PC-9 (cell line): ENCODE measurements at regions of chr12 and their contacts with region 1.

Region 1: DNA sequence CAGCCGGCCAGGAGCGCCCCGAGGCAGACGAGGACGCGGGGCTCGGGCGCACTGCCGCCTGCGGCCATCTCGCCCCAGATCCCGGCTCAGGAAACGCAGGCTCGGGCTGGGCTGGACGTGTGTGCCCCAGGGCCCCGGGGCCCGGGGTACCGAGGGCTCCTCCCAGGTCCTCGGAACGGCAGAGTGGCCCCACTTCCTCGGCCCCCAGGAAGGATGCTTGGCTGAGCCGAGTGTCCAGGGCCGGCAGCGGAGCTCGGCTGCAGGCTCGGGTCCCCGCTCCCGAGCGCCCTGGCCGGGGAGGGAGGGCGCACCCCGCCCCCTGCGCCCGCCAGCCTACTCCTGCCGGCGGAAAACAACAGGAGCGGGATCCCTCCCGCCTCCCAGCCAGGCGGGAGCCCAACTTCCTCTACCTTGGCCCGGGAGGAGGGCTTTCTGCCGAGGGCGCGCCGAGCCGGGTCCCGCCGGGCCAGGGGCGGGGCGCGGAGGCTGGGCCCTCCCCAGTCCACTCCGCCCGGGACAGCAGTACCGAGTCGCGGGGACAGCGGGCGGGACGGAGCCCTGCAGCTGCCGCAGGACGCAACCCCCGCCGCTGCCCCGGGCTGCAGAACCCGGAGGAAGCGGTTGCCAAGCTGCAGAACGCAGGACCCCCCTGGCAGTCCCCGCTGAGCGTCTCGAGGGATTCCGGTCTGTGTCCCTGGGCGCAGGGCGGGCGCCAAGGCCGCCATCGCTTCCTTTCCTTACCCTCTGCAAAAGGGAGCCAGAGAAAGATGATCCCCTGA is at the start of gene VSIG10:
- DNase-seq: peak; percentile 49 to 82
- H3K4me3 ChIP-seq: peak within 1 kb of the TSS; percentile 81
- H3K27ac ChIP-seq: 0 out of 2 replicates have a peak within 1 kb of the TSS, but pooled peaks have one; percentile 2
- H3K4me1 ChIP-seq: peaks cover 18% of the 10 kb centered on the region
- H3K27me3 ChIP-seq: no peaks in the 10 kb centered on the region
- CTCF ChIP-seq: no peak
- total RNA-seq, gene VSIG10: 45.7 and 49.1 TPM in 2 replicates

Region 2: DNA sequence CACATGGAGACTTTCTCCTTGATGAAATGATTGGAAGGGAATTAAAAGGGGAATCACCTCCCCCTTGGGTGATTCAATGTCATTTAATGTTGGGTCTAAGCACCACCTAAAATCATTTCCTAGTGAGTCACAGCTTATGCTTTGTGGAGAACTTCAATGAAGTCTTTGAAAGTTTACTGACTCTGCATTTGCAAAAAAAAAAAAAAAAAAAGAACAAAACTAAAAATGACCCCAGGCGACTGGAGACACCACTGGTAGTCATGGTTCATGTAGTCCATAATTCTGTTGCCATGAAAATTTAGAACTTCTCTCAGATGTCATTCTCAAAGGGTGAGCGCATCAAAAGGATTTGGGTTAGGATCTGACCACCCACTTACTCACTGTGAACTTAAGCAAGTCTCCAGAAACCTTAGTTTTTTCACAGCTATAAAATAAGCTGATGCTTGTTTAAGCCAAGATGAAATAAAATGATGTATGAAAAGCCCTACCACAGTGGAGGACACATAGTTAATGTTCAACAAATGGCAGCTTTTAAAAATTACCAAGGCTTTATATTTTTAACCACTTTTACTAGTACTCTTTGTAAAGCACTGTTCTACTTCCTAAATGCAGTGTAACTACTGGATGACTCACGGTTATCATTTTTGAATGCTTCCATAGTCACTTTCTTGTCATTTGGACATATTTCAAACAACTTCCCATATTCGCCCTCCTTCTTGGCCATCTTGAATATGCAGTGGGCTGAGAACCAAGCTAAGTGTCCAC is 116.9 kb before region 1 on chr12:
- CTCF ChIA-PET with region 1: no interaction called
- POLR2A ChIA-PET with region 1: no interaction called
- intact Hi-C with region 1: no loop called
- DNase-seq: peak; percentile 3 to 89
- H3K4me3 ChIP-seq: peak overlapping the region; percentile 26; the same call in 1 of the 2 replicates
- H3K27ac ChIP-seq: peak overlapping the region; percentile 82
- H3K4me1 ChIP-seq: peaks cover 21% of the 10 kb centered on the region
- H3K27me3 ChIP-seq: no peaks in the 10 kb centered on the region
- CTCF ChIP-seq: no peak

Region 3: GRCh38 chr12:118135788-118136558 is 32.2 kb after region 1 on chr12 and contains the start of gene PEBP1:
- CTCF ChIA-PET with region 1: no interaction called
- POLR2A ChIA-PET with region 1: no interaction called
- intact Hi-C with region 1: loop called (anchors 1 kb)
- DNase-seq: peak; percentile 85 to 96
- H3K4me3 ChIP-seq: peak within 1 kb of the TSS; percentile 83
- H3K27ac ChIP-seq: 0 out of 2 replicates have a peak within 1 kb of the TSS, but pooled peaks have one; percentile 34
- H3K4me1 ChIP-seq: peaks cover 38% of the 10 kb centered on the region
- H3K27me3 ChIP-seq: no peaks in the 10 kb centered on the region
- CTCF ChIP-seq: no peak
- total RNA-seq, gene PEBP1: 188 and 189 TPM in 2 replicates